Heart left ventricle (tissue), 16 donors: ENCODE measurements at regions of chr6 and their contacts with region 1.

Region 1: DNA sequence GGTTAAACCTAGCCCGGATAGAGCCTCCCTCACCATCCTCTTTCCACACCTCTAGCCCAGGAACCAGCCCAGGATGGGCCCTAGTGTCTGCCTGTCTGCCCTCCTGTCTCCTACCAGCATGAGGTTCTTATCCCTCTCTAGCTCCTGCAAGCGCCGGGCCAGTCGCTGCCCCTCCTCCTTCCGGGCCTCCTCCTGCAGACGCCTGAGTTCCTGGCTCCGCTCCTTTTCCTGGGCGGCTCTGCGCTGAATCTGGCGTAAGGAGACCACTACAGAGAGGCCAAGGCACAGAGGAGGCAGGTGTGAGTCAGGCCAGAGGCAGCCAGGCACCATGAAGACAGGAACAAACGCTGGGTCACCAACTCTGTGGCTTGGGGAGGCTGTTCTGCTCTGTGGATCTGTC is 4.3 kb upstream of the PSORS1C2 start:
- DNase-seq: peak; percentile 50 to 83 (median 77)
- ATAC-seq: peak; percentile 52 to 90 (median 87)
- H3K4me3 ChIP-seq: no peak overlapping the region
- H3K27ac ChIP-seq: peak overlapping the region in 10 of 12 donors; percentile 38 to 82 (median 52)
- H3K4me1 ChIP-seq: peaks cover 0 to 32% (median 16%) of the 10 kb centered on the region in 12 donors
- H3K27me3 ChIP-seq: no peaks in the 10 kb centered on the region
- CTCF ChIP-seq: no peak
- POLR2A ChIP-seq: peak in 1 of 2 donors; percentile 36

Region 2: DNA sequence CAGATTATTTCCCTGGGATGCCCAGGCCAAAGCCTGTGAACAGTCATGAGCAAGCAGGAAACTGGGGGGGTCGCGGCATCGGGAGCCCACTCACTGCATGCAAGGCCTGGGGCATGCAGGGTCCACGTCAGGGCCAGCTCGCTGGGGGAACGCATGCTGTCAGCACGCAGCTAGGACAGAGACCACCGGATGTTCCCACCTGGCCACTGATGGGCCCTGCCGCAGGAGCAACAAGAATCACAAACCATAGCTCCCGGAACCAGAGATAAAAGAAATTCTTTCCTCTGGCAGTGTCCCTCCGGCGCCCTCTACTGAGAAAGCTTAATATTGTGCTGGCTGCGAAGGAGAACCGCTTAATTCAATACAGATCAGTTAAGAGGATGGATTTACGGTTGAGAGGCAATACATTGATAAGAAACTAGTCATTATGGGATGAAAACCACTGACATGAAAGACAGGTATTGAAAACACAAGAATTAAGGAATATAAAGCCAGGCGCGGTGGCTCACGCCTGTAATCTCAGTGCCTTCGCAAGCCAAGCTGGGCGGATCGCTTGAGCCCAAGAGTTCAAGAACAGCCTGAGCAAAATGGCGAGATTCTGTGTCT is 63.4 kb before region 1 on chr6:
- intact Hi-C with region 1: no loop called
- DNase-seq: peak in 4 of 5 donors; percentile 42 to 59 (median 52)
- ATAC-seq: peak in 3 of 4 donors; percentile 66 to 75 (median 69)
- H3K4me3 ChIP-seq: peak overlapping the region in 9 of 12 donors; percentile 13 to 49 (median 29)
- H3K27ac ChIP-seq: no peak overlapping the region
- H3K4me1 ChIP-seq: peaks cover 0 to 19% (median 4%) of the 10 kb centered on the region in 12 donors
- H3K27me3 ChIP-seq: no peaks in the 10 kb centered on the region
- CTCF ChIP-seq: peak; percentile 63 to 92 (median 78)
- POLR2A ChIP-seq: no peak

Region 3: DNA sequence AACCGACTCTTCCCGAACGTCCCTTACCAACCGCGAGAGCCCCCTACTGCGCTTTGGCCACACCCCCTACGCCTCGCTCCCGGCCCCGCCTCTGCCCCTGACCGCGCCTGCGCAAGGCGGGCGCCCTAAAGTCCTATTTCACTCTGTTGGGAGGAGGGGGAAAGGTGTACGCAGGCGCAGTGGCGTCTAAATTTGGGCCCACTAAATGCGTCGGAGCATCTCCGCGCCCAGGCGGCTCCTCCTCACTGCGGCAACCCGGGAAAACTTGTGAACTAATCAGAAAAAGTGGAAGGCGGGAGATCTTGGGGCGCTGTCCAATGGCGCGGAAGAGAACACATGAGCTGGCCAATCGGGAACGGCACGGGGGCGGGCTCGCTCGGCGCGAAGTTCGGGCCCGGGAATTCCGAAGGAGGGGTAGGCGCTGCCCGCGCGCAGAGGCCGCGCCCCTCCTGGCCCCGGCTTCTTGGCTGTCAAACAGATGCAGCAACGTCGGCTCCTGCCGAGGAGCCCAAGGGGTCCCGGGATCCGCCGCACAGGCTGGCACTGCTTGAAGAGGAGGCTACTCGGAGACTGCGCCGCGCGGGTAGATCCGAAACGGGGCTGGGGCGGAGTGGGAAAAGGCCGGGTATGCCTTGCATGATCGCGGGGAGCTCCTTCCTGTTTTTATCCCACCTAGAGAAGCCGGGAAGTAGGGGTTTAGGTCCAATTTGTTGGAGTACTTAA is 15.2 kb after region 1 on chr6 and contains the start of gene TCF19:
- intact Hi-C with region 1: loop called in 1 of 10 experiments (anchors 1 kb)
- DNase-seq: peak; percentile 99
- ATAC-seq: peak; percentile 97 to 99 (median 98)
- H3K4me3 ChIP-seq: peak within 1 kb of the TSS; percentile 52 to 87 (median 68)
- H3K27ac ChIP-seq: peak within 1 kb of the TSS in 11 of 12 donors; percentile 33 to 83 (median 59)
- H3K4me1 ChIP-seq: peaks cover 0 to 26% (median 15%) of the 10 kb centered on the region in 12 donors
- H3K27me3 ChIP-seq: no peaks in the 10 kb centered on the region
- CTCF ChIP-seq: no peak
- POLR2A ChIP-seq: peak in 1 of 2 donors; percentile 58
- total RNA-seq, gene TCF19: 1.8 to 12.9 (median 2.7) TPM

Region 4: DNA sequence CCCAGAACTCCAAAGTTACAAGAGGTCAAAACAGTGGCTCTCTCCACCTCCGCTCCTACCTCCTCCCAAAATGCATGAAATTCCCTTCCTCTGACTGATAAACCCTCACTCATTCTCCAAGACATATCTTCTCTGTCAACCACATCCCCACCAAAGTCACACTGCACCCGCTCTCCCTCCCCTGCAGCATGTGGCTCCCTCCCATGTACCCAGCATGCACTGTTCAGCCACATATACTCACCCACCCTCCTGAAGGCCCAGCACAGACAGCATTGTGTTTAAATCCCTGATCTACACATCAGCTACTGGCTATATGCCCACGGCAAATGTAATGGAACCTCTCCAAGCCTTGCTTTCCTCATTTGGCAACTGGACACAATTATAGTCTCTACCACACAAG is 32.8 kb after region 1 on chr6:
- intact Hi-C with region 1: loop called in 1 of 10 experiments (anchors 5 kb)
- DNase-seq: no peak
- ATAC-seq: peak in 1 of 4 donors; percentile 49
- H3K4me3 ChIP-seq: no peak overlapping the region
- H3K27ac ChIP-seq: peak overlapping the region in 1 of 12 donors; percentile 41
- H3K4me1 ChIP-seq: peaks cover 0 to 45% (median 2%) of the 10 kb centered on the region in 12 donors
- H3K27me3 ChIP-seq: no peaks in the 10 kb centered on the region
- CTCF ChIP-seq: no peak
- POLR2A ChIP-seq: no peak

Region 5: GRCh38 chr6:31186052-31186734 is 43.0 kb after region 1 on chr6:
- intact Hi-C with region 1: loop called in 2 of 10 experiments (anchors 2 kb)
- DNase-seq: peak; percentile 67 to 88 (median 85)
- ATAC-seq: peak in 3 of 4 donors; percentile 45 to 71 (median 59)
- H3K4me3 ChIP-seq: peak overlapping the region; percentile 2 to 58 (median 44)
- H3K27ac ChIP-seq: peak overlapping the region; percentile 70 to 95 (median 81)
- H3K4me1 ChIP-seq: peaks cover 0 to 21% (median 0%) of the 10 kb centered on the region in 12 donors
- H3K27me3 ChIP-seq: no peaks in the 10 kb centered on the region
- CTCF ChIP-seq: no peak
- POLR2A ChIP-seq: peak in 1 of 2 donors; percentile 58

Region 6: DNA sequence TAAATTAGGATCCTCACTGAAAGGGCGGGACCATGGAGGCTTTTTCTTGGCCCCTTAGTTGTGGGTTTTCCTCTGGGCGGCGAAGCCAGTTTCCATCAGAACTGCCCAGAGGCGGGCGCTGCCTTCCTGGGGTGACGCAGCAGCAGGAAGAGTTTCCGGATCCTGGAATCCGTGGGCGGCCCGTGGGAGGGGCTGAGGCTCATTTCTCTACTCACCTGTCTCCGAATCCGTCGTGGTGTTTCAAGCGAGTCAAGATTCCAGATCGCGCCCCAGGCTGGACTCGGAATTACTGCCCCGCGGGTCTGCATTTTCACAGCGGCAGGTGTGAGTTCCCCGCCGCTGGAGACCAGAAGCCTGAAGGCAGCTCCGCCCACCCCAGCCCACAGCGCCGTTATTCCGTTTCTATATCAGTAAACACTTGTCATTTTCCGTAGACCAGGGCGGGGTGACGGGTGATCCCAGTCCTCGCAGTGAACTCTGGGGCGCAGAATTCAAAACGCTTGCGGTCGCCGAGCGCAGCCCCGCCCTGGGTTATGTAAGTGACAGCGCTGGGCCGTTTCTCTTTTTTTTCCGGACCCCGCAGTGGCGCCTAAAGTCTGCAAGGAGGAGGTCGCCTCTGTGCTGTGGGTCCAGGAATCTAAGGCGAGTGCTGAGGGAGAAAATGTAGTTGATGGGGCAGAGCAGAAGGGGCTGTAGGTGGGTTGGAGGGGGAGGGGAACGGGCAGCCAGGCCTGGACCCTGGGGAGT is 54.6 kb after region 1 on chr6:
- intact Hi-C with region 1: loop called in 3 of 10 experiments (anchors 1 to 2 kb)
- DNase-seq: peak; percentile 93 to 96 (median 94)
- ATAC-seq: peak; percentile 88 to 94 (median 90)
- H3K4me3 ChIP-seq: peak overlapping the region; percentile 48 to 87 (median 80)
- H3K27ac ChIP-seq: peak overlapping the region; percentile 95 to 99 (median 98)
- H3K4me1 ChIP-seq: peaks cover 0 to 31% (median 11%) of the 10 kb centered on the region in 12 donors
- H3K27me3 ChIP-seq: no peaks in the 10 kb centered on the region
- CTCF ChIP-seq: no peak
- POLR2A ChIP-seq: peak in 1 of 2 donors; percentile 64

Region 7: GRCh38 chr6:31366693-31367470 is 223.7 kb after region 1 on chr6:
- intact Hi-C with region 1: loop called in 5 of 10 experiments (anchors 5 kb)
- DNase-seq: peak; percentile 84 to 93 (median 86)
- ATAC-seq: peak; percentile 95 to 100 (median 100)
- H3K4me3 ChIP-seq: peak overlapping the region in 9 of 12 donors; percentile 34 to 52 (median 47)
- H3K27ac ChIP-seq: no peak overlapping the region
- H3K4me1 ChIP-seq: peaks cover 0 to 8% (median 4%) of the 10 kb centered on the region in 12 donors
- H3K27me3 ChIP-seq: peaks cover 0 to 42% (median 0%) of the 10 kb centered on the region in 9 donors
- CTCF ChIP-seq: peak; percentile 80 to 97 (median 92)
- POLR2A ChIP-seq: no peak